Right lobe of liver (tissue), 6 donors: ENCODE measurements at regions of chr19 and their contacts with region 1.

Region 1: DNA sequence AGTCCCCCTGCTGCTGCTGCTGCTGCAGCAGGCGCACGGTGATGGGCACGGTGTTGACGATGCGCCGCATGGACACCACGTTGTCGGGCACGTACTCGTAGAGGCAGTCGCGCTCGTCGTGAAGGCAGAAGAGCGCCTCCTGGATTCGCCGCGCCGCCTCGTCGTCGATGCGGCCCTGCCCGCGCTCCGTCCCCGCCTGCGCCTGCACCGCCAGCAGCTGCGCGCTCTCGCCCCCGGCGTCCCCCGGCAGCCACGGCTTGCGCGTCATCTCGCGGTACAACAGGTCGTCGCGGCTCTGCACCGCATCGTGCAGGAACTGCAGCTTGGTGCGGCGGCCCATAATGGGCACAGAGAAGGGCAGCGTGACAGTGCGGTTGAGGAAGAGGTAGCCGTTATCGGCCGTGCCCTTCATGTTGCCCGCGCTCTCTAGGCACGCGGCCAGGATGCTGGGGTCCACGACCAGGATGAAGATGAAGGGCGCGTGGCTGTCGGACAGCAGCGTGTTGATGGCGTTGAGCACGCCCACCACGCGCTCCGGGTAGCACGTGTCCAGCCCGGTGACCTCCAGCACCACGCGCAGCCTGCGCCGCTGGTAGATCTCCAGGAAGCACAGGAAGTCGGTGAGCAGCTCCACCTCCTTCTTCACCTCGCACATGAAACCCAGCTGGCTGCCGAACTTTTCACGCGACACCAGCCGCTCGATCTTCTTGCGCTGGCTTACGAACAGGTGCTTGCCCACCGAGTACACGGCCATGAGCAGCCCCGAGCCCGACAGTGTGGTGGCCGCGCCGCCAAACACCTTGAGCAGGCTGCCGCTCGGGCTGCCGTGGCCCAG is 8.1 kb downstream of the NKPD1 start:
- DNase-seq: peak in 1 of 3 donors; percentile 47
- ATAC-seq: peak; percentile 13 to 55 (median 46)
- H3K4me3 ChIP-seq: peak overlapping the region in 1 of 3 donors; percentile 24
- H3K27ac ChIP-seq: no peak overlapping the region
- H3K4me1 ChIP-seq: peaks cover 0 to 20% (median 8%) of the 10 kb centered on the region in 4 donors
- H3K27me3 ChIP-seq: peaks cover 0 to 24% of the 10 kb centered on the region in 2 donors
- CTCF ChIP-seq: no peak
- POLR2A ChIP-seq: no peak

Region 2: DNA sequence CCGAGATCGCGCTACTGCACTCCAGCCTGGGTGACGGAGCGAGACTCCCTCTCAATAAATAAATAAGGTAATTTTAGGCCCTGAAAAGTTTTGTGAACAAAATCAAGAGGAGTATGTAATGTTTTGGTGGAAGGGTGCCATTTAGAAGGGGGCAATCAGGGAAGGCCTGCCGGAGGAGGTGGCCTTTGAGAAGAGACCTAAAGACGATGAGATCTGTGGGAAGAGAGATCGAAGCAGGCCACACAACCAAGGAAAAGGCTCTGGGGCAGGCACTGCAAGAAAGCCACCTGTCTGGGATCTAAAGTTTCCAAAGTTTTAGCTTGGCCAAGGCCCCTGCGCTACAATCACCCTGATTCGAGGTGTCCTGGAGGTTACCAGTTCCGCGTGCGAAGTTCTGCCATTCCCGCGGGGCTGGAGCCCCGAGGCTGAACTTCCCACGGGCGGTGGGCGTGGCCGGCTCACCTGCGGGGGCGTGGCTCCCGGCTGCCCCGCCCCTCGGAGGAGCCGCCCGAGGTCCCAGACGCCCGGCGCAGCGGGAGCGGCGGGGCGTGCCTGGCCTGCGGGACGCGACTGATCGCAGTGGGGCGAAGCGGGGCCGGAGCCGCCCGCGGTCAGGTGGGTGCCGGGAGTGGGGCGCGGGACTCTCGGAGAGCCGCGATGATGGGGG is 187.6 kb after region 1 on chr19 and contains the start of gene KLC3:
- intact Hi-C with region 1: loop called in 1 of 2 experiments (anchors 10 kb)
- DNase-seq: no peak
- ATAC-seq: peak; percentile 53 to 57 (median 54)
- H3K4me3 ChIP-seq: peak within 1 kb of the TSS in 2 of 3 donors; percentile 14 to 33
- H3K27ac ChIP-seq: no peak within 1 kb of the TSS
- H3K4me1 ChIP-seq: peaks cover 0 to 7% (median 0%) of the 10 kb centered on the region in 4 donors
- H3K27me3 ChIP-seq: no peaks in the 10 kb centered on the region
- CTCF ChIP-seq: no peak
- POLR2A ChIP-seq: no peak
- total RNA-seq, gene KLC3: 0.22 to 0.26 TPM in 2 of 6 experiments, not detected in the others

Region 3: GRCh38 chr19:45391340-45391739 is 238.6 kb after region 1 on chr19:
- intact Hi-C with region 1: no loop called
- DNase-seq: no peak
- ATAC-seq: peak in 1 of 4 donors; percentile 25
- H3K4me3 ChIP-seq: no peak overlapping the region
- H3K27ac ChIP-seq: no peak overlapping the region
- H3K4me1 ChIP-seq: no peaks in the 10 kb centered on the region
- H3K27me3 ChIP-seq: no peaks in the 10 kb centered on the region
- CTCF ChIP-seq: no peak
- POLR2A ChIP-seq: no peak